ENCODE measurements at regions of chr2 and their contacts with region 1.

Region 1: DNA sequence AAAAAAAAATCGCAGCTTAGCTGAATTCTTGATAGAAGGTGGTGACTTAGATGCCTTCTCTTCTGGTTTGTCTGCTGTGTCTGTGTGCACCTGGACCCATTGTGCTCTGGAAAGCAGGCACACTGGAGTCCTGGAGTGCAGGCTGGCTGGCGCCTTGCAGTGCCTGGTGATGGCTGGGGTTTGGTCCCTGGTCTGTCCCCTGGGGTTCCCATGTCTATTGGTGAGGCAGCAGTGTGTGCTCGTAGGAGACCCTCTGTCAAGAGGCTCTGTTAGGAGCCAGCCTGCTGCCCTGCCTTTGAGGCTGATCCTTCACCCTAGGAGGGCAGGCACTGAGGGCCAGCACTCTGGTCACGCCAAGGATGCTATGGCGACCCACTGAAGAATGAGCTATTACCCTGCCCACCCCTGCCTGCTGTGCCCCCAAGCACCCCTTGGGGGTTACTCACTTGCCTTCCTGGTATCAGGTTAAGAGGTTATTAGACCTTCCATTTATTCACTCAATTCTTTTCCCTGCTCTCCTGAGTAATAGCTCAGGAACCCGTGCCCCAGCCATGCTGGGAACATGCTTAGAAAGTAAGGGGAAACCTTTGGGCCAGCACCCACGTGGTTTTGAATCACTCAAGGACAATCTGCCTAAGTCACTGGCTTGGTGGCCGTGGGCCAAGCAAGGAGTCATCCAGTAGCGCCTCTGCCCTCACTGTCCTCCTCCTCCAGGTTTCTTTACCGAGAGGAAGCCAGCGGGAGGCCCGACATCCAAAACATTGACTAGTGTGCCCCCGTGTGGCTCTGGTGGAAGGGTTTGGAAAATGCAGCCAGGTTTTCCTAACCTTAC is 284.5 kb downstream of the PRKCE start:
- DNase-seq: peak; percentile 93 to 98 (median 96)
- H3K4me3 ChIP-seq: no peak overlapping the region
- H3K27ac ChIP-seq: peak overlapping the region in 1 of 2 donors; percentile 52
- H3K4me1 ChIP-seq: peaks cover 12% of the 10 kb centered on the region
- H3K27me3 ChIP-seq: no peaks in the 10 kb centered on the region
- CTCF ChIP-seq: peak; percentile 63 to 91 (median 86)
- EP300 ChIP-seq: no peak
- POLR2A ChIP-seq: no peak

Region 2: GRCh38 chr2:45353879-45354278 is 582.1 kb before region 1 on chr2:
- intact Hi-C with region 1: no loop called
- DNase-seq: no peak
- H3K4me3 ChIP-seq: no peak overlapping the region
- H3K27ac ChIP-seq: no peak overlapping the region
- H3K4me1 ChIP-seq: no peaks in the 10 kb centered on the region
- H3K27me3 ChIP-seq: no peaks in the 10 kb centered on the region
- CTCF ChIP-seq: no peak
- EP300 ChIP-seq: no peak
- POLR2A ChIP-seq: no peak

Region 3: GRCh38 chr2:45643543-45644542 is 292.2 kb before region 1 on chr2:
- intact Hi-C with region 1: loop called (anchors 2 to 5 kb)
- DNase-seq: peak; percentile 59 to 84 (median 76)
- H3K4me3 ChIP-seq: peak overlapping the region; percentile 24
- H3K27ac ChIP-seq: no peak overlapping the region
- H3K4me1 ChIP-seq: no peaks in the 10 kb centered on the region
- H3K27me3 ChIP-seq: no peaks in the 10 kb centered on the region
- CTCF ChIP-seq: peak; percentile 94 to 98 (median 98)
- EP300 ChIP-seq: no peak
- POLR2A ChIP-seq: peak; percentile 27

Region 4: GRCh38 chr2:45778720-45779171 is 157.3 kb before region 1 on chr2:
- intact Hi-C with region 1: loop called in 2 of 4 experiments (anchors 10 kb)
- DNase-seq: peak; percentile 50 to 73 (median 54)
- H3K4me3 ChIP-seq: no peak overlapping the region
- H3K27ac ChIP-seq: no peak overlapping the region
- H3K4me1 ChIP-seq: no peaks in the 10 kb centered on the region
- H3K27me3 ChIP-seq: no peaks in the 10 kb centered on the region
- CTCF ChIP-seq: peak; percentile 49 to 55 (median 51)
- EP300 ChIP-seq: no peak
- POLR2A ChIP-seq: no peak

Region 5: GRCh38 chr2:45860136-45861121 is 75.6 kb before region 1 on chr2:
- intact Hi-C with region 1: loop called in 1 of 4 experiments (anchors 5 kb)
- DNase-seq: peak; percentile 71 to 82 (median 75)
- H3K4me3 ChIP-seq: peak overlapping the region; percentile 34
- H3K27ac ChIP-seq: peak overlapping the region; percentile 1 to 48
- H3K4me1 ChIP-seq: peaks cover 10% of the 10 kb centered on the region
- H3K27me3 ChIP-seq: no peaks in the 10 kb centered on the region
- CTCF ChIP-seq: no peak
- EP300 ChIP-seq: no peak
- POLR2A ChIP-seq: no peak

Region 6: GRCh38 chr2:45889053-45889452 is 47.0 kb before region 1 on chr2:
- intact Hi-C with region 1: loop called in 1 of 4 experiments (anchors 10 kb)
- DNase-seq: no peak
- H3K4me3 ChIP-seq: no peak overlapping the region
- H3K27ac ChIP-seq: no peak overlapping the region
- H3K4me1 ChIP-seq: peaks cover 16% of the 10 kb centered on the region
- H3K27me3 ChIP-seq: no peaks in the 10 kb centered on the region
- CTCF ChIP-seq: no peak
- EP300 ChIP-seq: no peak
- POLR2A ChIP-seq: no peak